CD4-positive, alpha-beta T cell (primary cell): ENCODE measurements at regions of chr15 and their contacts with region 1.

Region 1: DNA sequence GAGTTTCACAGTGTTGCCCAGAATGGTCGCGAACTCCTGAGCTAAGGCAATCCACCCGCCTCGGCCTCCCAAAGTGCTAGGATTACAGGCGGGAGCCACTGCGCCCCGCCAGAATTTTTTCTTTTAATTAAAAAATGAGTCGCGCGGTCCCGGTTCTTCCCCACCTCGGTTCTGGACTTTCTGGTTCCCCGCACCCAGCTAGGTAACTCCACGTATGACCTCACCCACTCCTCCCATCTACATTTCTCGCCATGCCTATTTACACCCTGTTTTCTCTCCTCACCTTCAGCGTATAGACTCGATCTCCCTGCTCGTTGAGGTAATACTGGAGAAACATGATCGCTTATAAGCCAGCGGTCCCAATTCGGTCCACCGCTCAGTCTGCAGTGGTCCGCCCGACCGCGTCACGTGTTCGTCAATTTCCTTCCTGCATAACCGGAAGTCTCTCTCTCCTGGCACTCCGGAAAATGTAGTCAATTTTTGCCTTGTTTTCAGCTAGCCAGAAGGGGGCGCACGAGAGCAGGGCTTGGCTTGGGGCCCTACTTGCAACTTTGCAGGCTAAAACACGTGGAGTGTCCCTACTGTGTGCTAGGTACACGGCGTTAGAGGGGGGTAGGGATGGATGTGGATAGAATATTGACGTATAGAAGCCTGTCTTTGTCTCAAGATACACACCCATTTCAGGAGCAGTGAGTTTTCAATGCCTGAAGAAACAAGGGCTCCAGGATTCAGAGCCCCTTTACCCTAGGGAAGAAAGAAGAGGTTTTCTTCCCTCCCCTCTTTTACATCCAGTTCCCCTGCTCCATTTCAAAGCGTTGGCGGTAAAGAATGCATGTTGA is at the starts of genes NOP10 and NUTM1:
- DNase-seq: peak; percentile 86 to 96 (median 92)
- ATAC-seq: peak; percentile 85
- H3K4me3 ChIP-seq: peak within 1 kb of the TSS; percentile 89
- H3K4me3 Mint-ChIP-seq: peak within 1 kb of the TSS; percentile 88
- H3K27ac ChIP-seq: peak within 1 kb of the TSS; percentile 85 to 87
- H3K27ac Mint-ChIP-seq: peak within 1 kb of the TSS; percentile 84
- H3K4me1 ChIP-seq: peaks cover 23% of the 10 kb centered on the region
- H3K4me1 Mint-ChIP-seq: peaks cover 17% of the 10 kb centered on the region
- H3K27me3 ChIP-seq: no peaks in the 10 kb centered on the region
- H3K27me3 Mint-ChIP-seq: no peaks in the 10 kb centered on the region
- CTCF ChIP-seq: peak; percentile 94
- total RNA-seq, gene NOP10: 44.4 to 44.8 TPM
- total RNA-seq, gene NUTM1: not detected

Region 2: DNA sequence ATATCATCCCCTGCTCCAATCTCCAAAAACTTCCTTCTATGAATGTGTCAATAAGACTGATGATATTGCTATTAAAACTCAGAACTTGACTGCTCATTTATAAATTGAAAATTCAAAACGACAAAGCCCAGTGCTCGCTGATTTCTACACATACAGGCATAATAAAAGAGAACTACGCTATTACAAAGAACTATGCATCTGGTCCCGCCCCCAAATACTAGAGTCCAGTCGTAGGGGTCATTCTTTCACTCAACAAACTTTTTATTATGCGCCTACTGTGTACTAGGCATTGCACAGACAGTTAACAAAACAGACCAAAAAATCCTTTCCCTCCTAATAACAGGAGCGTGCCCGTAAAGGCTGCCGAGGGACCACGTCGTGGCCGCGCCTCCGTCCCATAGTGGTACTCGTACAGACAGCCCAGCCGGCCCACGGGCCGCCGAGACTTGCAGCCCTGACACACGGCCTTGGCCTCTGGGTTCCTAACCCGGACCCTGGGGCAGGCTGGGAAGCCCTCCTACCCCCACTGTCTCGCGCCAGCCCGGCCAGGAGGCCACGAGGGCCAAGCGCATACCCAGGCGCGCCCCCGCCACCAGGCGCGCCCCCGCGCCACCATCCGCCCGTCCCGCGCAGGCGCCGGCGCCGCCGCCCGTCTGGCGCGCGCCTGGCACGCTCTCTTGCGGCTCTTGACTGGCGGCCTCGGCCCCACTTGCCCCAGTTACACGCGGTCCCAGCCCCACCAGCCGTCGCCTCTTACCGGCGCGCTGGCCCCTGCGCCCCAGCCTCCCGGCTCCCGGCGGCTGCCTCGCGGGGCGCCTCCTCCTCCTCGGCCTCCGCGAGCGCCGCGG is 304.7 kb before region 1 on chr15:
- CTCF ChIA-PET with region 1: no interaction called
- POLR2A ChIA-PET with region 1: interaction called, 4 read pairs
- intact Hi-C with region 1: loop called in 1 of 2 experiments (anchors 5 kb)
- DNase-seq: peak; percentile 51 to 91 (median 68)
- ATAC-seq: peak; percentile 81
- H3K4me3 ChIP-seq: peak overlapping the region; percentile 76
- H3K4me3 Mint-ChIP-seq: peak overlapping the region; percentile 91
- H3K27ac ChIP-seq: peak overlapping the region; percentile 55 to 57
- H3K27ac Mint-ChIP-seq: peak overlapping the region; percentile 90
- H3K4me1 ChIP-seq: peaks cover 7% of the 10 kb centered on the region
- H3K4me1 Mint-ChIP-seq: peaks cover 20% of the 10 kb centered on the region
- H3K27me3 ChIP-seq: no peaks in the 10 kb centered on the region
- H3K27me3 Mint-ChIP-seq: no peaks in the 10 kb centered on the region
- CTCF ChIP-seq: no peak

Region 3: GRCh38 chr15:34101366-34102175 is 241.4 kb before region 1 on chr15 and contains the starts of genes EMC7 and PGBD4:
- CTCF ChIA-PET with region 1: no interaction called
- POLR2A ChIA-PET with region 1: interaction called, 9 read pairs
- intact Hi-C with region 1: loop called (anchors 5 kb)
- DNase-seq: peak; percentile 97 to 100 (median 99)
- ATAC-seq: peak; percentile 96
- H3K4me3 ChIP-seq: peak within 1 kb of the TSS; percentile 80
- H3K4me3 Mint-ChIP-seq: peak within 1 kb of the TSS; percentile 91
- H3K27ac ChIP-seq: peak within 1 kb of the TSS; percentile 86 to 97
- H3K27ac Mint-ChIP-seq: peak within 1 kb of the TSS; percentile 96
- H3K4me1 ChIP-seq: peaks cover 20% of the 10 kb centered on the region
- H3K4me1 Mint-ChIP-seq: peaks cover 54% of the 10 kb centered on the region
- H3K27me3 ChIP-seq: no peaks in the 10 kb centered on the region
- H3K27me3 Mint-ChIP-seq: no peaks in the 10 kb centered on the region
- CTCF ChIP-seq: no peak
- total RNA-seq, gene EMC7: 54.0 to 54.6 TPM
- total RNA-seq, gene PGBD4: 2.3 to 2.6 TPM

Region 4: GRCh38 chr15:34241372-34242330 is 101.3 kb before region 1 on chr15:
- CTCF ChIA-PET with region 1: interaction called, 14 read pairs
- POLR2A ChIA-PET with region 1: interaction called, 11 read pairs
- intact Hi-C with region 1: no loop called
- DNase-seq: peak in 9 of 14 experiments; percentile 7 to 77 (median 25)
- ATAC-seq: peak; percentile 99
- H3K4me3 ChIP-seq: no peak overlapping the region
- H3K4me3 Mint-ChIP-seq: no peak overlapping the region
- H3K27ac ChIP-seq: no peak overlapping the region
- H3K27ac Mint-ChIP-seq: peak overlapping the region; percentile 22
- H3K4me1 ChIP-seq: no peaks in the 10 kb centered on the region
- H3K4me1 Mint-ChIP-seq: peaks cover 4% of the 10 kb centered on the region
- H3K27me3 ChIP-seq: no peaks in the 10 kb centered on the region
- H3K27me3 Mint-ChIP-seq: no peaks in the 10 kb centered on the region
- CTCF ChIP-seq: peak; percentile 93

Region 5: GRCh38 chr15:34318277-34319079 is 24.5 kb before region 1 on chr15:
- CTCF ChIA-PET with region 1: interaction called, 3 read pairs
- POLR2A ChIA-PET with region 1: interaction called, 127 read pairs
- intact Hi-C with region 1: no loop called
- DNase-seq: peak in 7 of 14 experiments; percentile 12 to 62 (median 45)
- ATAC-seq: peak; percentile 85
- H3K4me3 ChIP-seq: peak overlapping the region; percentile 69
- H3K4me3 Mint-ChIP-seq: peak overlapping the region; percentile 99
- H3K27ac ChIP-seq: peak overlapping the region; percentile 11 to 38
- H3K27ac Mint-ChIP-seq: peak overlapping the region; percentile 97
- H3K4me1 ChIP-seq: peaks cover 16% of the 10 kb centered on the region
- H3K4me1 Mint-ChIP-seq: peaks cover 74% of the 10 kb centered on the region
- H3K27me3 ChIP-seq: no peaks in the 10 kb centered on the region
- H3K27me3 Mint-ChIP-seq: no peaks in the 10 kb centered on the region
- CTCF ChIP-seq: no peak

Region 6: GRCh38 chr15:34331809-34332208 is 11.1 kb before region 1 on chr15:
- CTCF ChIA-PET with region 1: interaction called, 14 read pairs
- POLR2A ChIA-PET with region 1: interaction called, 127 read pairs
- intact Hi-C with region 1: loop called in 1 of 2 experiments (anchors 1 kb)
- DNase-seq: peak in 3 of 14 experiments; percentile 43 to 62 (median 49)
- ATAC-seq: peak; percentile 40
- H3K4me3 ChIP-seq: no peak overlapping the region
- H3K4me3 Mint-ChIP-seq: peak overlapping the region; percentile 40
- H3K27ac ChIP-seq: peak overlapping the region; percentile 18 to 39
- H3K27ac Mint-ChIP-seq: peak overlapping the region; percentile 98
- H3K4me1 ChIP-seq: peaks cover 55% of the 10 kb centered on the region
- H3K4me1 Mint-ChIP-seq: peaks cover 87% of the 10 kb centered on the region
- H3K27me3 ChIP-seq: no peaks in the 10 kb centered on the region
- H3K27me3 Mint-ChIP-seq: no peaks in the 10 kb centered on the region
- CTCF ChIP-seq: no peak

Region 7: GRCh38 chr15:34652726-34653033 is 309.7 kb after region 1 on chr15:
- CTCF ChIA-PET with region 1: no interaction called
- POLR2A ChIA-PET with region 1: no interaction called
- intact Hi-C with region 1: no loop called
- DNase-seq: no peak
- ATAC-seq: no peak
- H3K4me3 ChIP-seq: no peak overlapping the region
- H3K4me3 Mint-ChIP-seq: no peak overlapping the region
- H3K27ac ChIP-seq: no peak overlapping the region
- H3K27ac Mint-ChIP-seq: no peak overlapping the region
- H3K4me1 ChIP-seq: no peaks in the 10 kb centered on the region
- H3K4me1 Mint-ChIP-seq: no peaks in the 10 kb centered on the region
- H3K27me3 ChIP-seq: no peaks in the 10 kb centered on the region
- H3K27me3 Mint-ChIP-seq: peaks cover 42% of the 10 kb centered on the region
- CTCF ChIP-seq: no peak

Region 8: GRCh38 chr15:34837246-34838016 is 494.5 kb after region 1 on chr15:
- CTCF ChIA-PET with region 1: no interaction called
- POLR2A ChIA-PET with region 1: no interaction called
- intact Hi-C with region 1: no loop called
- DNase-seq: no peak
- ATAC-seq: no peak
- H3K4me3 ChIP-seq: no peak overlapping the region
- H3K4me3 Mint-ChIP-seq: no peak overlapping the region
- H3K27ac ChIP-seq: no peak overlapping the region
- H3K27ac Mint-ChIP-seq: no peak overlapping the region
- H3K4me1 ChIP-seq: no peaks in the 10 kb centered on the region
- H3K4me1 Mint-ChIP-seq: no peaks in the 10 kb centered on the region
- H3K27me3 ChIP-seq: peaks cover 0 to 5% of the 10 kb centered on the region in 2 experiments
- H3K27me3 Mint-ChIP-seq: peaks cover 9% of the 10 kb centered on the region
- CTCF ChIP-seq: no peak